Body of pancreas (tissue), 4 donors: ENCODE measurements at regions of chr16 and their contacts with region 1.

Region 1: DNA sequence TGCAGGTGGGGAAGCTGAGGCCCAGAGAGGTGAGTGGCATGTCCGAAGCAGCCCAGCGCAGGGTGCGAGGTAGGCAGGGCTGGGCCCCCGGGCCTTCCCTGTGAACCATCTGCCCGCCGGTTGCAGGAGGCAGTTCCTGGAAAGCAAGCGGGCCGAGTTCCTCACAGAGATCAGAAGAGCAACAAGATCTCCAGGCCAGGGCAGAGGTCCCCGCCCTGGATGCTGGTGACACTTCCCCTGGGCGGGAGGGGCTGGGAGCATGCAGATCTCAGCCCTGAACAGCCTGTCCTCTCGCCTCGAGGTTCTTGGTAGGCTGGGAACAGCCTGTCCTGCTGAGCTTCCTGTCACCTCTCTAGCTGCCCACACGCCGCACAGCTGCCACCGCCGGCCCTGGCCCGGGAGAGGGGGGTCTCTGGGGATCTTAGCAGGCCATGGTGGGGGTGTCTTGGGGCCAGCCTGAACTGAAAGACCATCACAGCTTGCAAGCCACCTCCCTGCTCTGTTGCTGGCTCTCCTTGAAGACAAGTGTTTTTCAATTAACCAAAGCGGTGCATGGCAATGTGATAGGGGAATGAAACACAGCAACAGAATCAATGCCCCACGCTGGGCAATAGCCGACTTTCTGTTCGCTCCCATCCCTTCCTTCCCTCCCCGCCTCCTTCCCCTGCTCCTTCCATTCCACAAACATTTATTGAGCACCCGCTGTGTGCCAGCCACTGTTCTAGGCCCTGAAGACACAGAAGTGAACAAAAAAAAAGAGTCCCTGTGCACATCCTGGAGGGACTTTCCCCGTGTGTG is 31.7 kb downstream of the SOCS1 start:
- DNase-seq: peak; percentile 32 to 82 (median 54)
- ATAC-seq: peak; percentile 67
- H3K4me3 ChIP-seq: no peak overlapping the region
- H3K27ac ChIP-seq: peak overlapping the region in 2 of 4 donors; percentile 19 to 66
- H3K4me1 ChIP-seq: no peaks in the 10 kb centered on the region
- H3K27me3 ChIP-seq: no peaks in the 10 kb centered on the region
- CTCF ChIP-seq: no peak
- POLR2A ChIP-seq: no peak

Region 2: GRCh38 chr16:11105038-11105903 is 119.0 kb before region 1 on chr16:
- intact Hi-C with region 1: loop called (anchors 10 kb)
- DNase-seq: peak in 1 of 4 donors; percentile 47
- ATAC-seq: peak; percentile 56
- H3K4me3 ChIP-seq: no peak overlapping the region
- H3K27ac ChIP-seq: no peak overlapping the region
- H3K4me1 ChIP-seq: peaks cover 28% of the 10 kb centered on the region
- H3K27me3 ChIP-seq: no peaks in the 10 kb centered on the region
- CTCF ChIP-seq: no peak
- POLR2A ChIP-seq: no peak

Region 3: GRCh38 chr16:11283820-11284248 is 59.5 kb after region 1 on chr16:
- intact Hi-C with region 1: loop called (anchors 10 kb)
- DNase-seq: no peak
- ATAC-seq: no peak
- H3K4me3 ChIP-seq: no peak overlapping the region
- H3K27ac ChIP-seq: no peak overlapping the region
- H3K4me1 ChIP-seq: no peaks in the 10 kb centered on the region
- H3K27me3 ChIP-seq: no peaks in the 10 kb centered on the region
- CTCF ChIP-seq: no peak
- POLR2A ChIP-seq: no peak

Region 4: GRCh38 chr16:11312718-11313492 is 88.6 kb after region 1 on chr16:
- intact Hi-C with region 1: no loop called
- DNase-seq: peak; percentile 43 to 74 (median 64)
- ATAC-seq: peak; percentile 71
- H3K4me3 ChIP-seq: no peak overlapping the region
- H3K27ac ChIP-seq: peak overlapping the region; percentile 35 to 65 (median 42)
- H3K4me1 ChIP-seq: peaks cover 16% of the 10 kb centered on the region
- H3K27me3 ChIP-seq: no peaks in the 10 kb centered on the region
- CTCF ChIP-seq: no peak
- POLR2A ChIP-seq: no peak